B cell (primary cell): ENCODE measurements at regions of chr15 and their contacts with region 1.

Region 1: DNA sequence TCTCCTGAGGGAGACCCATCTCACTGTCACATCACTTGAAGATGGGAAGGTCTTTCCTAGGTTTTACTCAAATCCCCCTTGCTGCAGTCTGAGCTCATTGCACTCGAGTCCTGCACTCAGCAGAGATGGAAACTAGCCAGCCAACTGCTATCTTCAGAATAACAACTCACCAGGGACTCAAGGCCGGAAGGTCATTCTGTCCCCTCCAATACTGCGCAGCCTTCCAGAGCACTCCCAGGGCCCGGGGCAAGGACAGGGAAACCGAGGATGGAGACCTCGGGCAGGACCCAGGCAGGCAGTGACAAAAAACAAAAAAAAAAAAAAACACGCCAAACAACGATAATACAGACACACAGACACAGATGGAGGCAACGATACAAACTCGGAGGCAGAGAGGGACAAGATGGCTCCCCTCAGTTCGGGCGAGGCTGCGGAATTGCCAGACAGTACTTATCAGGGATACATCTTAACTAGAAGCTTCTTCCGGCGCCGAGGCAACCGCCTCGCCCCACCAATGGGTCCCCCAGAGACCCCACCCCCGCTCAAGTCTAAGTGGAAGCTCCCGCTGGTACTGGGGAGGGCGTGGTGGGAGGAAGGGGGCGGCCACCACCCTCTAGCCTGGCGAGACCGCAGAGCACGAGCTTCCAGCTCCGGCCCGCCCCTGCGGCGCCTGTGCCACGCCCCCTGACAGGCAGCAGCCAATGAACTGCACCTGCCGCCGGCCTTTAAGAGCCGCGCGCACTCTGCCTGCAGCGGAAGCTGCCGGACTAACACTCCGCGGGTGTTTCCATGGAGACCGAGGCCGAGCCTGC is 7.0 kb upstream of the MAP1A start:
- DNase-seq: peak; percentile 99
- ATAC-seq: peak; percentile 96
- H3K4me3 ChIP-seq: peak overlapping the region; percentile 70 to 98 (median 72)
- H3K4me3 Mint-ChIP-seq: peak overlapping the region; percentile 99
- H3K27ac ChIP-seq: peak overlapping the region; percentile 61 to 71
- H3K27ac Mint-ChIP-seq: peak overlapping the region; percentile 98
- H3K4me1 ChIP-seq: peaks cover 10 to 16% of the 10 kb centered on the region in 2 donors
- H3K4me1 Mint-ChIP-seq: peaks cover 17% of the 10 kb centered on the region
- H3K27me3 ChIP-seq: peaks cover 0 to 16% (median 5%) of the 10 kb centered on the region in 4 experiments
- H3K27me3 Mint-ChIP-seq: peaks cover 18% of the 10 kb centered on the region
- CTCF ChIP-seq: peak; percentile 12

Region 2: GRCh38 chr15:43185157-43186017 is 325.0 kb before region 1 on chr15 and contains the start of gene CCNDBP1:
- CTCF ChIA-PET with region 1: no interaction called
- POLR2A ChIA-PET with region 1: no interaction called
- intact Hi-C with region 1: loop called (anchors 10 kb)
- DNase-seq: peak; percentile 92
- ATAC-seq: peak; percentile 93
- H3K4me3 ChIP-seq: peak within 1 kb of the TSS; percentile 43 to 94 (median 75)
- H3K4me3 Mint-ChIP-seq: peak within 1 kb of the TSS; percentile 99
- H3K27ac ChIP-seq: peak within 1 kb of the TSS; percentile 87 to 94
- H3K27ac Mint-ChIP-seq: peak within 1 kb of the TSS; percentile 98
- H3K4me1 ChIP-seq: peaks cover 21 to 32% of the 10 kb centered on the region in 2 donors
- H3K4me1 Mint-ChIP-seq: peaks cover 38% of the 10 kb centered on the region
- H3K27me3 ChIP-seq: no peaks in the 10 kb centered on the region
- H3K27me3 Mint-ChIP-seq: no peaks in the 10 kb centered on the region
- CTCF ChIP-seq: peak; percentile 67
- total RNA-seq, gene CCNDBP1: 113 and 116 TPM in 2 replicates

Region 3: GRCh38 chr15:43370975-43371974 is 139.1 kb before region 1 on chr15 and contains the starts of genes TUBGCP4 and ZSCAN29:
- CTCF ChIA-PET with region 1: interaction called, 11 read pairs
- POLR2A ChIA-PET with region 1: no interaction called
- intact Hi-C with region 1: loop called (anchors 5 kb)
- DNase-seq: peak; percentile 87
- ATAC-seq: peak; percentile 81
- H3K4me3 ChIP-seq: peak within 1 kb of the TSS; percentile 65 to 94 (median 83)
- H3K4me3 Mint-ChIP-seq: peak within 1 kb of the TSS; percentile 94
- H3K27ac ChIP-seq: peak within 1 kb of the TSS; percentile 43 to 79
- H3K27ac Mint-ChIP-seq: peak within 1 kb of the TSS; percentile 92
- H3K4me1 ChIP-seq: peaks cover 31 to 33% of the 10 kb centered on the region in 2 donors
- H3K4me1 Mint-ChIP-seq: peaks cover 58% of the 10 kb centered on the region
- H3K27me3 ChIP-seq: no peaks in the 10 kb centered on the region
- H3K27me3 Mint-ChIP-seq: no peaks in the 10 kb centered on the region
- CTCF ChIP-seq: peak; percentile 48
- total RNA-seq, gene TUBGCP4: 24.0 and 31.6 TPM in 2 replicates
- total RNA-seq, gene ZSCAN29: 51.5 and 54.4 TPM in 2 replicates

Region 4: GRCh38 chr15:43483306-43484128 is 26.9 kb before region 1 on chr15:
- CTCF ChIA-PET with region 1: interaction called, 97 read pairs
- POLR2A ChIA-PET with region 1: no interaction called
- intact Hi-C with region 1: loop called (anchors 1 kb)
- DNase-seq: peak; percentile 28
- ATAC-seq: no peak
- H3K4me3 ChIP-seq: no peak overlapping the region
- H3K4me3 Mint-ChIP-seq: no peak overlapping the region
- H3K27ac ChIP-seq: no peak overlapping the region
- H3K27ac Mint-ChIP-seq: no peak overlapping the region
- H3K4me1 ChIP-seq: no peaks in the 10 kb centered on the region
- H3K4me1 Mint-ChIP-seq: peaks cover 4% of the 10 kb centered on the region
- H3K27me3 ChIP-seq: no peaks in the 10 kb centered on the region
- H3K27me3 Mint-ChIP-seq: no peaks in the 10 kb centered on the region
- CTCF ChIP-seq: peak; percentile 41

Region 5: GRCh38 chr15:43498988-43499387 is 11.4 kb before region 1 on chr15:
- CTCF ChIA-PET with region 1: interaction called, 97 read pairs
- POLR2A ChIA-PET with region 1: interaction called, 4 read pairs
- intact Hi-C with region 1: no loop called
- DNase-seq: no peak
- ATAC-seq: no peak
- H3K4me3 ChIP-seq: no peak overlapping the region
- H3K4me3 Mint-ChIP-seq: no peak overlapping the region
- H3K27ac ChIP-seq: no peak overlapping the region
- H3K27ac Mint-ChIP-seq: no peak overlapping the region
- H3K4me1 ChIP-seq: no peaks in the 10 kb centered on the region
- H3K4me1 Mint-ChIP-seq: no peaks in the 10 kb centered on the region
- H3K27me3 ChIP-seq: no peaks in the 10 kb centered on the region
- H3K27me3 Mint-ChIP-seq: no peaks in the 10 kb centered on the region
- CTCF ChIP-seq: no peak

Region 6: DNA sequence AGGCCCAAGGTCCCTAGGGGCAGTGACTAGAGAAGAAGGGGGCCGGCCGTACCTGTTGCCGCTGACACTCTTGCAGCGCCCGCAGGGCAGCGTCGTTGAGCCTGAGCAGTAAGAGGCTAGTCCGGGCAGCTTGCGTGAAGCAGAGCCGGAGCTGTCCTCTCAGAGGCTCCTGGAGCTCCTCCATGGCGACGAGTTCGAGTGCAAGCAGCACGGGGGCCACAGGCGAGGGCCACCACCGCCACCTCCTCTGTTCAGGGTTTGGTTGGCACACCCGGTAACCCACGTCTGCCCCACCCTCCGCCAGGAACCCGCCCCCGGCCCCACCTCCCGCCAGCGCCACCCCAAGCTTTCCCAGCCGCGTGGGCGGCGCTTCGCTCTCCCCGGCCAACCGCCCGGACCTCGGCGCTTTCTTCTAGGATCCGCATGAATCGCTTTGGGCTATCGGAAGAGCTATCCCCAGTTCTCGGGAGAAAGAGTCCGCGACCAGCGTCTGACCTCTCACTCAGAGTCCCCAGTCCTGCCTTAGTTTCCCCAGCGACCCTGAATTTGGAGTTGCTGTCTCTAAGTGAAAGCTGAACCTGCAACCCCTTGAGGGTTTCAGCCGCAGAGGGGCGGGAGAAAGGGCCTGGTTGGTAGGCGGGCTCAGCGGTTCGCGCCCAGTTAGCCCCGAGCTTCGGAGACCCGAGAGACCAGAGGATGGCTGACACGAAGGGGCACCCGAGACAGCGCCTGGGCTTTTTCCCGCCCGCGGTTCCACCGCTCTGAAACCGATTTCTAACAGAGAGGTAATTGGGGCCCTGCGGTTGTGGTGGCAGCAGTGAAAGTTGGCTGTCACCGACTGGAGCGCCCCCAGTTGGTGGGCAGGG is 266.5 kb after region 1 on chr15 and contains the start of gene ELL3:
- CTCF ChIA-PET with region 1: no interaction called
- POLR2A ChIA-PET with region 1: interaction called, 10 read pairs
- intact Hi-C with region 1: no loop called
- DNase-seq: peak; percentile 91
- ATAC-seq: peak; percentile 62
- H3K4me3 ChIP-seq: peak within 1 kb of the TSS; percentile 78 to 93 (median 88)
- H3K4me3 Mint-ChIP-seq: peak within 1 kb of the TSS; percentile 96
- H3K27ac ChIP-seq: peak within 1 kb of the TSS; percentile 73 to 76
- H3K27ac Mint-ChIP-seq: peak within 1 kb of the TSS; percentile 97
- H3K4me1 ChIP-seq: peaks cover 16 to 30% of the 10 kb centered on the region in 2 donors
- H3K4me1 Mint-ChIP-seq: peaks cover 41% of the 10 kb centered on the region
- H3K27me3 ChIP-seq: no peaks in the 10 kb centered on the region
- H3K27me3 Mint-ChIP-seq: no peaks in the 10 kb centered on the region
- CTCF ChIP-seq: peak; percentile 93
- total RNA-seq, gene ELL3: 88.8 and 90.0 TPM in 2 replicates

Region 7: DNA sequence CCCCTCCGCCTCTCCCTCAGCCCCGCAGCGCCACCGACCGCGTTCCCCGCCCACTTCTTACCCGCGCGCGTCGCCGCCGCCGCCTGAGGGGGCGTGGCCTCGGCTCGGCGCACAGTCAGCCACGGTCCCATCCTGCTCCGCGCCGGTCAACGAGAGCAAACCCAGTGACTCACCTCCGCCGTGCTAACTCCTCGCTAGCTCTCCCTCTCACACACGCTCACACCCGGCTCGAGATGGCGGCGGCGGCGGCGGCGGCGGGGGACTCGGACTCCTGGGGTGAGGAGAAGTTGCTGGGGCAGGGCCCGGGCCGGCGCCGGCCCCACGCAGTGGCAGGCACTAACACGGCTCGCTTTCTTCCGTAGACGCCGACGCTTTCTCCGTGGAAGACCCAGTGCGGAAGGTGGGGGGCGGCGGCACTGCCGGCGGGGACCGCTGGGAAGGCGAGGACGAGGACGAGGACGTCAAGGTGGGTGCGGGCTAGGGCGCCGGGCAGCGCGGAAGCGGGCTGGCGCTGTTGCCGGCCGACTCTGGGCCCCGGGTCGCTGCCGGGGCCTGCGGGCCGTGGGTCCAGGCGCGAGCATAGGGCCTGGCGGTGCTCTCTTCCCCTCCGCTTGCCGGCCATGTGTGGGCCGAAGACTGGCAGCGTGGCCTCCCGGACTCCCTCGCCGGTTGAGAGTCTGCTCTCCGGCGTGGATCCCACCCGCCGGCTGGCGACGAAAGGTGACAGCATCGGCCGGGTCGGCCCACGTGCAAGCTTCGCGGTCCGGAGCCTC is 1026.7 kb after region 1 on chr15 and contains the start of gene EIF3J:
- CTCF ChIA-PET with region 1: no interaction called
- POLR2A ChIA-PET with region 1: no interaction called
- intact Hi-C with region 1: loop called (anchors 5 kb)
- DNase-seq: peak; percentile 97
- ATAC-seq: peak; percentile 89
- H3K4me3 ChIP-seq: peak within 1 kb of the TSS; percentile 82 to 99 (median 92)
- H3K4me3 Mint-ChIP-seq: peak within 1 kb of the TSS; percentile 93
- H3K27ac ChIP-seq: peak within 1 kb of the TSS; percentile 83 to 94
- H3K27ac Mint-ChIP-seq: peak within 1 kb of the TSS; percentile 98
- H3K4me1 ChIP-seq: peaks cover 15 to 21% of the 10 kb centered on the region in 2 donors
- H3K4me1 Mint-ChIP-seq: peaks cover 40% of the 10 kb centered on the region
- H3K27me3 ChIP-seq: no peaks in the 10 kb centered on the region
- H3K27me3 Mint-ChIP-seq: no peaks in the 10 kb centered on the region
- CTCF ChIP-seq: no peak
- total RNA-seq, gene EIF3J: 61.0 and 66.7 TPM in 2 replicates